ENCODE measurements at regions of chr19 and their contacts with region 1.

Region 1: GRCh38 chr19:2416321-2417097 is 10.9 kb downstream of the TIMM13 start:
- DNase-seq: no peak
- ATAC-seq: no peak
- H3K4me3 Mint-ChIP-seq: no peak overlapping the region
- H3K27ac Mint-ChIP-seq: no peak overlapping the region
- H3K4me1 Mint-ChIP-seq: no peaks in the 10 kb centered on the region
- H3K27me3 Mint-ChIP-seq: no peaks in the 10 kb centered on the region
- CTCF ChIP-seq: no peak

Region 2: GRCh38 chr19:2328401-2329148 is 87.9 kb before region 1 on chr19 and contains the starts of genes LSM7 and SPPL2B:
- CTCF ChIA-PET with region 1: no interaction called
- POLR2A ChIA-PET with region 1: no interaction called
- intact Hi-C with region 1: no loop called
- DNase-seq: peak; percentile 97
- ATAC-seq: peak; percentile 52
- H3K4me3 Mint-ChIP-seq: peak within 1 kb of the TSS; percentile 100
- H3K27ac Mint-ChIP-seq: peak within 1 kb of the TSS; percentile 99
- H3K4me1 Mint-ChIP-seq: peaks cover 86% of the 10 kb centered on the region
- H3K27me3 Mint-ChIP-seq: no peaks in the 10 kb centered on the region
- CTCF ChIP-seq: no peak
- total RNA-seq, gene LSM7: 149 and 152 TPM in 2 replicates
- total RNA-seq, gene SPPL2B: 112 and 142 TPM in 2 replicates

Region 3: GRCh38 chr19:2552859-2553258 is 136.3 kb after region 1 on chr19:
- CTCF ChIA-PET with region 1: no interaction called
- POLR2A ChIA-PET with region 1: interaction called, 11 read pairs
- intact Hi-C with region 1: no loop called
- DNase-seq: peak; percentile 27
- ATAC-seq: peak; percentile 94
- H3K4me3 Mint-ChIP-seq: peak overlapping the region; percentile 75
- H3K27ac Mint-ChIP-seq: peak overlapping the region; percentile 89
- H3K4me1 Mint-ChIP-seq: peaks cover 28% of the 10 kb centered on the region
- H3K27me3 Mint-ChIP-seq: no peaks in the 10 kb centered on the region
- CTCF ChIP-seq: no peak